ENCODE measurements at regions of chr13 and their contacts with region 1.

Region 1: DNA sequence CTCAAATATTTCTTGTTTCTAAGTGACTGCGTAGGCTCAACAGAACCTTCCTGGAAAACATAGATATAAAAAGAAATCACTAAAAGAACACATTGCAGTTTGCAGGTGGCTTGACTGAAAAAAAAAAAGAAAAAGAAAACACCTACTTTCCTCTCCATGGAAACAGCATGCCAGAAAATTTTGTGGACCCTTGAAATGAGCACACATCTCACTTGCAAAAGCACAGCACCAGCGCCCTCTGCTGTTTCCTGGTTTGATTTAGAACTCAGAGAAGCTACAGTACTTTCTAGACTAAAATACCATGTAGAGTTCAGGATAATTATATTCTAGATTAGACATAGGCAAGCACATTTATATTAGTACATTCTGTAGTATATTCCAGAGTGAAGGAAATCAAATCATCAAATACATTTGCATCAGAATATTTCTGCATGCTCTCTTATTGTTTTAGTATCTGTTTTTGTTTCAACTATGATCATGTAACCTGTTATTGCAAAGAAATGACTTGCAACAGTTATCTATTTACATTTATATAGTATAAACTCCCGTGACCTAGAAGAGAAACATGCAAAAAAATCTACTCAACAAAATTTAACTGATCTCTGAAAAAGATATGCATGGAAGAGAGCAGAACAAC is 22.3 kb upstream of the XPO4 start:
- DNase-seq: peak; percentile 52 to 84
- ATAC-seq: peak in 1 of 3 donors; percentile 61
- H3K4me3 ChIP-seq: no peak overlapping the region
- H3K4me3 Mint-ChIP-seq: no peak overlapping the region
- H3K27ac ChIP-seq: no peak overlapping the region
- H3K27ac Mint-ChIP-seq: no peak overlapping the region
- H3K4me1 ChIP-seq: no peaks in the 10 kb centered on the region
- H3K4me1 Mint-ChIP-seq: no peaks in the 10 kb centered on the region
- H3K27me3 ChIP-seq: no peaks in the 10 kb centered on the region
- H3K27me3 Mint-ChIP-seq: peaks cover 0 to 4% of the 10 kb centered on the region in 2 donors
- CTCF ChIP-seq: peak; percentile 89

Region 2: GRCh38 chr13:20197361-20197834 is 727.5 kb before region 1 on chr13:
- intact Hi-C with region 1: loop called (anchors 2 kb)
- DNase-seq: peak in 1 of 2 donors; percentile 75
- ATAC-seq: peak; percentile 70 to 81 (median 77)
- H3K4me3 ChIP-seq: no peak overlapping the region
- H3K4me3 Mint-ChIP-seq: no peak overlapping the region
- H3K27ac ChIP-seq: no peak overlapping the region
- H3K27ac Mint-ChIP-seq: no peak overlapping the region
- H3K4me1 ChIP-seq: peaks cover 17% of the 10 kb centered on the region
- H3K4me1 Mint-ChIP-seq: peaks cover 14 to 18% of the 10 kb centered on the region in 2 donors
- H3K27me3 ChIP-seq: peaks cover 36% of the 10 kb centered on the region
- H3K27me3 Mint-ChIP-seq: peaks cover 53 to 61% of the 10 kb centered on the region in 2 donors
- CTCF ChIP-seq: peak; percentile 86

Region 3: GRCh38 chr13:20711301-20712044 is 213.4 kb before region 1 on chr13:
- intact Hi-C with region 1: loop called (anchors 1 kb)
- DNase-seq: peak in 1 of 2 donors; percentile 17
- ATAC-seq: no peak
- H3K4me3 ChIP-seq: no peak overlapping the region
- H3K4me3 Mint-ChIP-seq: no peak overlapping the region
- H3K27ac ChIP-seq: no peak overlapping the region
- H3K27ac Mint-ChIP-seq: no peak overlapping the region
- H3K4me1 ChIP-seq: peaks cover 7% of the 10 kb centered on the region
- H3K4me1 Mint-ChIP-seq: peaks cover 7 to 9% of the 10 kb centered on the region in 2 donors
- H3K27me3 ChIP-seq: no peaks in the 10 kb centered on the region
- H3K27me3 Mint-ChIP-seq: peaks cover 18 to 24% of the 10 kb centered on the region in 2 donors
- CTCF ChIP-seq: no peak

Region 4: DNA sequence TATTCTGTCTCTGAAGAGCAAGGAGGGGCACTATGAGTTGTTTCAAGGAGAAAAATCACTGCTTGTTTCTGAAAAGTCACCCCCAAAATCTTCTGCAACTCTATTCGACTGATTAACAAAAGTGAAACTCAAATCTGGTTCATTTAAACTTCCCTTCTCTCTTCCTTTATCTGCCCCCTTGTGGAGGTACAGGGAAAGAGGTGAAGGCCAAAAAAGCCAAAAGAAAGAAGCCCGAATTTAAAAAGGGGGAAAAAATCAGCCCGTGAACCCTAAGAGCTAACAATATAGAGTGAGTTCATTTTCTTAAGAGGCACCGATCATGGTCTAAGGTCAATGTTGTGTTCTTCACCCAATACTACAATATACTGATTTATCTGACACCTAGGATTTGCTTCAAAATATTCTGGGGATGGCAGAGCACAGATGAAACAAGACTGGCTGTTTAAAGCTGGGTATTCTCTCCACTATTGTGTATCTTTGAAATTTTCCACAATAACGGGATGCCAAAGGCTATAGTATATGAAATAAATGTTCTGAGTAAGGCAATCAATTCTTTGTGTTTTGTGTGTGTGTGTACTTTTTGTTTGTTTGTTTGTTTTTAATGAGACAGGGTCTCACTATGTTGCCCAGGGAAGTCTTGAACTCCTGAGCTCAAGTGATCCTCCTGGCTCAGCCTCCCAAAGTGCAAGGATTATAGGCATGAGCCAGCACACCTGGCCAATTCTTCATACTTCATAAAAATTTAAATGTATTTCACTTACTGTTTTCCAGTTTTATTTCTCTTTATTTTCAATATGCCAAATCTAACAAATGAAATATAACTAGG is 96.1 kb before region 1 on chr13:
- intact Hi-C with region 1: loop called (anchors 2 kb)
- DNase-seq: peak in 1 of 2 donors; percentile 81
- ATAC-seq: peak; percentile 82 to 94 (median 87)
- H3K4me3 ChIP-seq: no peak overlapping the region
- H3K4me3 Mint-ChIP-seq: peak overlapping the region; percentile 55
- H3K27ac ChIP-seq: no peak overlapping the region
- H3K27ac Mint-ChIP-seq: peak overlapping the region; percentile 62 to 72
- H3K4me1 ChIP-seq: no peaks in the 10 kb centered on the region
- H3K4me1 Mint-ChIP-seq: peaks cover 7 to 8% of the 10 kb centered on the region in 2 donors
- H3K27me3 ChIP-seq: no peaks in the 10 kb centered on the region
- H3K27me3 Mint-ChIP-seq: no peaks in the 10 kb centered on the region
- CTCF ChIP-seq: peak; percentile 77

Region 5: DNA sequence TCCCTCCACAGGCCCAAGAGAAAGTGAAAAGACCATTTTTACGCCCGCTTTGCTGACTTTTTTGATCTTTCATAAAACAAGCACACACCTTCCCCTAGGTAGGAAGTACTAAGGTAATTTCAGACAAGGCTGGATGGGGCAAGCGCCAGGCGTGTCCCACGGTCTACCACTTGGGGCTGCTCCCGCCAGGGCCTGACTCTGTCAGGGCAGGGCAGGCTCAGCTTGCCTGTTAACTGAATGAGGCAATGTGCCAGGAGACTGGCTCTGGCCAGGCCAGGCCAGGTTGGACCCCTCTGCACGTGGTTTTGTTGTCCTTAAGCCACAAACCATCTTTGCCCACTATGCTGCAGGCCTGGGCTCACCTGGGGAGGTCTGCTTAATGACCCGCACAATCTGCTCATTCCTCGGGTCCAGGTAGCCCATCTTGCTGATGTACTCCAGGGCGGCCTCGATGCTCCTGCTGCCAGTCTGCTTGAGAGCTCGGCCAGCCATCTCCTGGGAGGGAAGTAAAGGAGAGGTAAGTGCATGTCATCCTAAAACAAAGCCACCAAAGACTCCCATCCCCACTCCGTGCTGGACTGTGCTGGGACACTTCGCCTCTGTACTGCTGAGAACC is 66.1 kb after region 1 on chr13:
- intact Hi-C with region 1: no loop called
- DNase-seq: no peak
- ATAC-seq: no peak
- H3K4me3 ChIP-seq: no peak overlapping the region
- H3K4me3 Mint-ChIP-seq: no peak overlapping the region
- H3K27ac ChIP-seq: no peak overlapping the region
- H3K27ac Mint-ChIP-seq: peak overlapping the region in 1 of 2 donors; percentile 58
- H3K4me1 ChIP-seq: no peaks in the 10 kb centered on the region
- H3K4me1 Mint-ChIP-seq: peaks cover 35 to 37% of the 10 kb centered on the region in 2 donors
- H3K27me3 ChIP-seq: no peaks in the 10 kb centered on the region
- H3K27me3 Mint-ChIP-seq: no peaks in the 10 kb centered on the region
- CTCF ChIP-seq: no peak

Measured in natural killer cell (primary cell).